WTC11 (cell line): ENCODE measurements at regions of chr18 and their contacts with region 1.

Region 1: DNA sequence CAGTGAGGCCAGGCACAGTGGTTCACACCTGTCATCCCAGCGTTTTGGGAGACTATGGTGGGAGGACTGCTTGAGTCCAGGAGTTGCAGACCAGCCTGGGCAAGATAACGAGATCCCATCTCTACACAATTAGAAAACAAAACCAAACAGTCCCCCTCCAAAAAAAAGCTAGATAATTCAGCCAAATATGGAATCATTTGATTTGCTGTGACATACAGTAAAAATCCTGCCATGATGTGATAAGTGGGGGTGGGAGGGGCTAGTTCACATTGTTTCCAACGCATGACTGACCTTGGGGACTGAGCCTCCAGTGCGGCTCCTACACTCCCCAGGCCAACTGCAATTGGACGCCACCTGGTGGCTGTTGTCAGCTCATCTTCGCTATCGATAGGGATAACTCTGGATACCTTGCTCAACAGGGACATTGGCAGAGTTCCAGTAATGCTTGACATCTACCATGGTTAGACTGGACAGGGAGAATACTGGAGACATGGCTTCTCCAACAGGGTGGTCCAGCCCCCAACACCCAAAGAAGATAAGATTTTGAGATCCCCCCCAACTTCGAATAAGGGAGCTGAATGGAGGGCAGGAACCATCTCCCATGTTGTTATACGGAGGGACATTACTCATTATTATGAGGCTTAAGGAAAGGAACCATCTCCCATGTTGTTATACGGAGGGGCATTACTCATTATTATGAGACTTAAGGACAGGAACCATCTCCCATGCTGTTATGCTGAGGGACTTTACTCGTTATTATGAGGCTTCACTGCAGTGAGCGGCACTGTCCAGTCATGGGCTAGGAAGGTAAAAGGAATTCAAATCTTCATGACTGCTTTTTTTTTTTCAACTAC is 135.9 kb downstream of the TGIF1 start:
- DNase-seq: peak; percentile 90
- ATAC-seq: peak; percentile 86
- H3K4me3 Mint-ChIP-seq: no peak overlapping the region
- H3K27ac Mint-ChIP-seq: peak overlapping the region; percentile 96
- H3K4me1 Mint-ChIP-seq: peaks cover 63% of the 10 kb centered on the region
- H3K27me3 Mint-ChIP-seq: peaks cover 7% of the 10 kb centered on the region
- CTCF ChIP-seq: peak; percentile 72

Region 2: GRCh38 chr18:3281456-3282400 is 304.2 kb before region 1 on chr18:
- CTCF ChIA-PET with region 1: interaction called, 14 read pairs
- POLR2A ChIA-PET with region 1: no interaction called
- DNase-seq: no peak
- ATAC-seq: peak; percentile 51
- H3K4me3 Mint-ChIP-seq: no peak overlapping the region
- H3K27ac Mint-ChIP-seq: no peak overlapping the region
- H3K4me1 Mint-ChIP-seq: peaks cover 52% of the 10 kb centered on the region
- H3K27me3 Mint-ChIP-seq: no peaks in the 10 kb centered on the region
- CTCF ChIP-seq: peak; percentile 62

Region 3: GRCh38 chr18:3441290-3441689 is 144.6 kb before region 1 on chr18:
- CTCF ChIA-PET with region 1: interaction called, 10 read pairs
- POLR2A ChIA-PET with region 1: no interaction called
- DNase-seq: peak; percentile 38
- ATAC-seq: peak; percentile 92
- H3K4me3 Mint-ChIP-seq: no peak overlapping the region
- H3K27ac Mint-ChIP-seq: peak overlapping the region; percentile 52; the same call in 1 of the 2 replicates
- H3K4me1 Mint-ChIP-seq: peaks cover 46% of the 10 kb centered on the region
- H3K27me3 Mint-ChIP-seq: no peaks in the 10 kb centered on the region
- CTCF ChIP-seq: no peak

Region 4: DNA sequence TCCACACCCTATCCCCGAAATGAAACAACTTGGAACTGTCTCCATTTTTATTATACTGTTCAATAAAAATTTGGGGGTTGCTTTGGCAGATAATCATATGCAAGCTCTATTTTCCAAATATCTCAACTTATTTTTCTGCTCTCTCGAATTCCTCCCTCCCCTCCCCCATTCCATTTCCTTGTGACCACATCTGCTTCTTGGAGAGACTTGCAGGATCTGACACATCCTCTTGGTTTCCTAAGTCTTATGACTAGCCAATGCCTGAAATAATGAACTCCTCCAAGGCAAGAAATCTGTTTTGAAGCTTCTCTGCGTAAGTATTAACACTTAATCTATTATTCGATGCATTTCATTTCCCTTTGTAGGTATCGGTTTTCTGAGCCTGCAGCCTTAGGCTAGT is 119.8 kb before region 1 on chr18:
- CTCF ChIA-PET with region 1: interaction called, 37 read pairs
- POLR2A ChIA-PET with region 1: no interaction called
- DNase-seq: no peak
- ATAC-seq: no peak
- H3K4me3 Mint-ChIP-seq: no peak overlapping the region
- H3K27ac Mint-ChIP-seq: peak overlapping the region; percentile 97
- H3K4me1 Mint-ChIP-seq: peaks cover 52% of the 10 kb centered on the region
- H3K27me3 Mint-ChIP-seq: no peaks in the 10 kb centered on the region
- CTCF ChIP-seq: no peak

Region 5: DNA sequence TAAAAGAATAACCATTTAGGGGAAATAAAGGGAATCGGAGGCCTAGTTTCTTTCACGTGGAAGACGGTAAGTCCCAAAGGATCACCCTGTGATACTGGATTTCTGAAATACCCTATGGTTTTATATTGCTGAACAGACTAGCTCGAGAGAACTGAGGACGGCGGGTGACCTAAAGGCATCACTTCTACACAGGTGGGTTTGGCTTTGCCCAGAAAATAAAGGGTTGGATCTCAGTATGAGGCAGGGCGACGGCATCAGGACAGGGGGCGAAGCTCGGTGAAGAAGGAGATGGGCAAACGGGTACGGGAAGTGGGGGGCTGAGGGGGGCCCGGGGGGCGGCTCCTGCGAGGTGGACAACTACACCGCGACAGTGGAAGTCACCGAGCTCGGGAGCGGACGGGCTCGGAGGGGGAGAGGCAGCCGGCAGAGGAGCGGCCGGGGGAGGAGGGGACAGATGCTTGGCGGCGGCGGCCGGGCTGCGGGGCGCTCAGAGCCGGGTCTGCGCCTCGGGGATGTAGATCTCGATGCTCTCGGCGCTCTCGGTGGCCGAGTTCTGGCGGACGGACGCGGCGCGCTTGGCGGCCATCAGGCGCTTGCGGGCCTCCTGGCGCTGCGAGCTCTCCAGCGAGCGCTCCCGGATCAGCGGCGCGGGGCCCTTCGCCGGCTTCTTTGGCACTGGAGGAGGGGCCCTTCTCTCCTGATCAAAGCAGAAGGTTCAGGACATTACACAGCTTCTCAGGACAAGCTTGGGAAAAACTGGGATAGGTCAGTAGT is 87.0 kb before region 1 on chr18:
- CTCF ChIA-PET with region 1: interaction called, 30 read pairs
- POLR2A ChIA-PET with region 1: interaction called, 4 read pairs
- DNase-seq: peak; percentile 78
- ATAC-seq: peak; percentile 82
- H3K4me3 Mint-ChIP-seq: peak overlapping the region; percentile 79
- H3K27ac Mint-ChIP-seq: peak overlapping the region; percentile 38; the same call in 1 of the 2 replicates
- H3K4me1 Mint-ChIP-seq: peaks cover 37% of the 10 kb centered on the region
- H3K27me3 Mint-ChIP-seq: peaks cover 10% of the 10 kb centered on the region
- CTCF ChIP-seq: no peak

Region 6: DNA sequence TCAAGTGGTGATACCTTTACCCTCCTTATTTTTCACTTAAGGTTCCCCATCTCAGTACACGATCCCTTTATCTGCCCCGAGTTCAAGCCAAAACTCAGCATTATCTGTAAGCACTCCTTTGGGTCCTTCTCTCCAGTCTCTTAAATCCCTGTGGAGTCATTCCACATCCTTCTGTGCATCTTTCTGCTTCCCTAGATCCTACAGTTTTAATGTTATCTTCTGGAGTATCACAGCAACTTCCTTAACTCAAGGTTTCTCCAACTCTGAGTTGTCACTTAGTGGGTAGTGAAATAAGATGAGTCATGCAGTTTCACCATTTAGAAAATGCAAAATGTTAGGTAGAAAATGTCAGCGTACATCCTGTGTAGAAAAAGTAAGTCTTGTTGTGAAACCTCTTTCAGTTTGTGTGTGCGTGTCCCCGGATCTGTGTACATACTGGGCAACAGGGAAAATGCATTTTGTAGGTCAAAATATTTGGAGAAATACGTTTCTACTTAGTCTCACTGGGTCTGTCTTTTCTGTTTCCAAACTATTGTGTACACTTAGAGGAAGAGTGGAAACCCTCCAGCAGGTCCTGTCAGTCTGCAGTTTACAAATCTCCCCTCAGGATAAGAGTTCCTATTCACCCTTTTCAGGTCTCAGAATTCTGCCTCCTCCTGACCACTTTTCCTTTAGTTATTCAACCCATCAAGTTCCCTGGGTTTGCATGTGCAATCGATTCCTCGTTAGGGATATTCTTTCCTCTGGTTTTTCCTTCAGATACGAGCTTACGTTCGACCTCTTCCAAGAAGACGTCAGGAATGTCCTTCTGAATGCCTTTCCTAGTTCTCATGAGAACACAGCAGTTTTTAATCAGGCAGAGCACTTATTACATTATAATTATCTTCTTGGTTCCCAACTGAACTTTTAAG is 18.9 kb after region 1 on chr18:
- CTCF ChIA-PET with region 1: interaction called, 26 read pairs
- POLR2A ChIA-PET with region 1: interaction called, 13 read pairs
- DNase-seq: no peak
- ATAC-seq: no peak
- H3K4me3 Mint-ChIP-seq: no peak overlapping the region
- H3K27ac Mint-ChIP-seq: no peak overlapping the region
- H3K4me1 Mint-ChIP-seq: peaks cover 24% of the 10 kb centered on the region
- H3K27me3 Mint-ChIP-seq: no peaks in the 10 kb centered on the region
- CTCF ChIP-seq: no peak